CD4-positive, alpha-beta memory T cell (primary cell): ENCODE measurements at regions of chr2 and their contacts with region 1.

Region 1: GRCh38 chr2:8681786-8682692 is at the start of gene ID2:
- DNase-seq: peak; percentile 98 to 99 (median 98)
- H3K4me3 ChIP-seq: peak within 1 kb of the TSS; percentile 82 to 85
- H3K4me3 Mint-ChIP-seq: peak within 1 kb of the TSS; percentile 94 to 100 (median 99)
- H3K27ac ChIP-seq: peak within 1 kb of the TSS; percentile 74
- H3K27ac Mint-ChIP-seq: peak within 1 kb of the TSS; percentile 90 to 97 (median 96)
- H3K4me1 ChIP-seq: peaks cover 41% of the 10 kb centered on the region
- H3K4me1 Mint-ChIP-seq: peaks cover 32 to 61% (median 37%) of the 10 kb centered on the region in 4 donors
- H3K27me3 ChIP-seq: no peaks in the 10 kb centered on the region
- H3K27me3 Mint-ChIP-seq: peaks cover 9 to 18% of the 10 kb centered on the region in 2 donors
- total RNA-seq, gene ID2: 50.8 to 56.4 TPM

Region 2: DNA sequence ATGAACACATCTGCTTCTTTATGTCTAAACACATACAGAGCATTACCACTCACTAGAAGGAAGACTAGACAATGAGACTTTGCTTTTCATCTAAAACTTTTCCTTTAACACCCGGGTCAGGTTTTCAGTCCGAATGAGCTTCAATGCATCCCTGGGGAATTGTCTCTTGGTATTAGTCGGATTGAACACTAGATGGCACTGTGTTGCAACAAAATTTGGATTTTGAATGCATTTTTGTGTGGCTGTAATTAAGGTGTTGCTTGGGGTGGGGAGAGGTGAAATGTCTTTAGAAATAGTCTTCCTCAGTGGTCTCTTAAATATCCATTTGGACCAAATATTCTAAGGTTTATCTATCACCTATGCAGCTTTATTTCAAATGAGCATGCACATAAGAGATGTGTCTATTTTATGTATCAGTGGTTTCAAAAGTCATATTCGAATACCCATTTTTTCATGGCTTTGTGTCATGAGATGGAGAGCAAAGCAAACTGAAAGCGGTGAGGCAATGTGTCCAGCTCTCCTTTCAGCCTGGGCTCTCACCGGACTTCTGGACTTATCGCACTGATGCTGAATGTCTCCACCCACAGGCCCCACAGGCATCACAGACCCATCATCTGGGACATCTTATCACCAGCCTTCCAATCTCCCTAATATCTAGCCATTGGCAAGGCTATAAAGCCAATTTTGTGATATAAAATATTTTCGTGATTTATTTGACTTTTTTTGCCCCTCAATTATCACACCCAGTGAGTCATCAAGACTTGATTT is 1254.6 kb before region 1 on chr2:
- CTCF ChIA-PET with region 1: interaction called, 64 read pairs
- POLR2A ChIA-PET with region 1: interaction called, 20 read pairs
- intact Hi-C with region 1: loop called (anchors 1 kb)
- DNase-seq: peak in 4 of 5 donors; percentile 57 to 69 (median 64)
- H3K4me3 ChIP-seq: no peak overlapping the region
- H3K4me3 Mint-ChIP-seq: peak overlapping the region in 4 of 8 donors; percentile 4 to 49 (median 30)
- H3K27ac ChIP-seq: no peak overlapping the region
- H3K27ac Mint-ChIP-seq: peak overlapping the region in 5 of 7 donors; percentile 8 to 52 (median 16)
- H3K4me1 ChIP-seq: peaks cover 9% of the 10 kb centered on the region
- H3K4me1 Mint-ChIP-seq: peaks cover 19 to 46% (median 32%) of the 10 kb centered on the region in 4 donors
- H3K27me3 ChIP-seq: no peaks in the 10 kb centered on the region
- H3K27me3 Mint-ChIP-seq: peaks cover 1 to 2% of the 10 kb centered on the region in 2 donors

Region 3: DNA sequence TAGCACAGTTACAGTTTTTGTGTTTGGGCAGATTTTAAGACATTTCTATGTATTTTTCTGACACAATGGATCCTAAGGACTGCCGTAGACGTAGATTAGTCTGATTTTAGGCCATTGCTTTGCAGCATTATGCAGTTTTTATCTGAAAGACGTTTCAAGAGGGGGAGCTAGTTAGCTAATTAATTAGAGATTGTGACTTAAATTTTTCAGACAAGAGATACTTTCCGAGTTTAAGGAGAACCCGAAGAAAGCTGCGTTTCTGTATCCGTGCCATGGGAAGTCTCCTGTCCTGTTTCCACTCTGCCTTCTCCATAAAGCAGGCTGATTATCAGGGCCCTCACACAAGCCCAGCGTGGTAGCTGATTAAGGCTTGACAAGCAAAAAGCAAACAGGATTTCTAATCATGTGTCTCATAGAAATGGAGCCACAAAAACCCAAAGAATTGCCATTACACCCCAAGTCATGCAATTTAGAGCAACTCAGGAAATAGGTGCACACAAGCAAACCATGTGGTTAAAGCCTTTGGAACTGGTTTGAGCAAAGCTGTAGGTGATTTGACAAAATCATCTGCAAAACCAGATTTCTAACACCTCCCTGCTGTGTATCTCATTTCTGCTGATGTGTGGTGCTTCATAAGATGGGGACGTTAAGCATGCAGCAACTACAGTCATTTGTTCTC is 956.7 kb before region 1 on chr2:
- CTCF ChIA-PET with region 1: interaction called, 40 read pairs
- POLR2A ChIA-PET with region 1: interaction called, 101 read pairs
- intact Hi-C with region 1: loop called (anchors 1 kb)
- DNase-seq: peak; percentile 65 to 74 (median 69)
- H3K4me3 ChIP-seq: peak overlapping the region in 1 of 2 donors; percentile 13
- H3K4me3 Mint-ChIP-seq: peak overlapping the region; percentile 53 to 92 (median 80)
- H3K27ac ChIP-seq: peak overlapping the region; percentile 26
- H3K27ac Mint-ChIP-seq: peak overlapping the region; percentile 68 to 97 (median 88)
- H3K4me1 ChIP-seq: peaks cover 40% of the 10 kb centered on the region
- H3K4me1 Mint-ChIP-seq: peaks cover 29 to 77% (median 54%) of the 10 kb centered on the region in 4 donors
- H3K27me3 ChIP-seq: no peaks in the 10 kb centered on the region
- H3K27me3 Mint-ChIP-seq: no peaks in the 10 kb centered on the region

Region 4: GRCh38 chr2:8303322-8303832 is 378.7 kb before region 1 on chr2:
- CTCF ChIA-PET with region 1: no interaction called
- POLR2A ChIA-PET with region 1: interaction called, 18 read pairs
- intact Hi-C with region 1: loop called (anchors 2 kb)
- DNase-seq: peak; percentile 72 to 82 (median 76)
- H3K4me3 ChIP-seq: peak overlapping the region; percentile 33 to 40
- H3K4me3 Mint-ChIP-seq: peak overlapping the region; percentile 7 to 83 (median 77)
- H3K27ac ChIP-seq: no peak overlapping the region
- H3K27ac Mint-ChIP-seq: peak overlapping the region; percentile 73 to 90 (median 83)
- H3K4me1 ChIP-seq: peaks cover 70% of the 10 kb centered on the region
- H3K4me1 Mint-ChIP-seq: peaks cover 48 to 86% (median 67%) of the 10 kb centered on the region in 4 donors
- H3K27me3 ChIP-seq: no peaks in the 10 kb centered on the region
- H3K27me3 Mint-ChIP-seq: no peaks in the 10 kb centered on the region

Region 5: GRCh38 chr2:8477552-8478470 is 204.2 kb before region 1 on chr2:
- CTCF ChIA-PET with region 1: interaction called, 9 read pairs
- POLR2A ChIA-PET with region 1: interaction called, 81 read pairs
- intact Hi-C with region 1: no loop called
- DNase-seq: peak; percentile 55 to 66 (median 60)
- H3K4me3 ChIP-seq: peak overlapping the region; percentile 27 to 41
- H3K4me3 Mint-ChIP-seq: peak overlapping the region; percentile 75 to 94 (median 82)
- H3K27ac ChIP-seq: peak overlapping the region; percentile 70
- H3K27ac Mint-ChIP-seq: peak overlapping the region; percentile 92 to 98 (median 96)
- H3K4me1 ChIP-seq: peaks cover 95% of the 10 kb centered on the region
- H3K4me1 Mint-ChIP-seq: peaks cover 66 to 100% (median 88%) of the 10 kb centered on the region in 4 donors
- H3K27me3 ChIP-seq: no peaks in the 10 kb centered on the region
- H3K27me3 Mint-ChIP-seq: no peaks in the 10 kb centered on the region

Region 6: GRCh38 chr2:8754106-8754776 is 72.2 kb after region 1 on chr2:
- CTCF ChIA-PET with region 1: no interaction called
- POLR2A ChIA-PET with region 1: no interaction called
- intact Hi-C with region 1: no loop called
- DNase-seq: no peak
- H3K4me3 ChIP-seq: no peak overlapping the region
- H3K4me3 Mint-ChIP-seq: no peak overlapping the region
- H3K27ac ChIP-seq: no peak overlapping the region
- H3K27ac Mint-ChIP-seq: no peak overlapping the region
- H3K4me1 ChIP-seq: no peaks in the 10 kb centered on the region
- H3K4me1 Mint-ChIP-seq: peaks cover 0 to 6% (median 3%) of the 10 kb centered on the region in 4 donors
- H3K27me3 ChIP-seq: no peaks in the 10 kb centered on the region
- H3K27me3 Mint-ChIP-seq: no peaks in the 10 kb centered on the region

Region 7: DNA sequence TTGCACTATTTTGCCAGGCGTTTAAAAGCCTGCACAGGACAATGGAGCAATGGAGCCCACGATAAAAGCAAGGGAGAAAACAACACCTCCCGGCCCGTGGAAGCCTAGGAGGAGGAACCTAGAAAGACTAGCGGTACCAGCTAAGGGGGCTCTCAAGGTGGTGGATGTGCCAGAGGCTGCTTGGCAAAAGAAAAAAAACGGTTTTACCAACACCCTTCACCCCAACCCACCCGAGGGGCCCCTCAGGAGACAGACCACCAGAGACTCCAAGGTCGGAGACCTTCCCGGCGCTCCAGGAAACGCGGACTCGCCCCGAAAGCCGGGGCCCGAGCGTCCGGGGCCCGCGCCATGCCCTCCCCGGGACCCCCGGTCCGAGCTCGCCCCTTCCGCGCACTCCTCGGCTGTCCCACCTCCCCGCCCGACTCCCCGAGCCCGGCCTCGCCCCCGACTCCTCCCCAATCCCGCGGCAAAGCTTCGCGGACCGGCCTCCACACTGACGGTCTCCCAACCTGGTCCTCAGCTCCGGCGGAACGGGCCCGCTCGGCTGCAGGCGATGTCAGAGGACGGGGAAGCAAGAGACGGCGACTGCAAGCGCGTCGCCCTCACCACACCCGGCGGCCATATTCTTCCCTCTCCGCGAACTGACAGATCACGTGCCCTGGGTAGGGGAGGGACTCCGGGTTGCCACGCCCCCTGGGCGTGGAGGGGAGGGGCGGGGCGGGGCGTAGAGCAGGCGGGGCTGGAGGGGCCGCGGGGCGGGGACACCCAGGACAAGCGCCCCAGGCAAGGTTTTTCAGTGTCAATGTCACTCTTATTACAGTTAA is 155.1 kb after region 1 on chr2 and contains the start of gene KIDINS220:
- CTCF ChIA-PET with region 1: no interaction called
- POLR2A ChIA-PET with region 1: interaction called, 8 read pairs
- intact Hi-C with region 1: loop called (anchors 5 kb)
- DNase-seq: peak; percentile 82 to 87 (median 84)
- H3K4me3 ChIP-seq: peak within 1 kb of the TSS; percentile 77 to 85
- H3K4me3 Mint-ChIP-seq: peak within 1 kb of the TSS; percentile 99 to 100 (median 100)
- H3K27ac ChIP-seq: peak within 1 kb of the TSS; percentile 61
- H3K27ac Mint-ChIP-seq: peak within 1 kb of the TSS; percentile 87 to 99 (median 99)
- H3K4me1 ChIP-seq: peaks cover 44% of the 10 kb centered on the region
- H3K4me1 Mint-ChIP-seq: peaks cover 33 to 62% (median 46%) of the 10 kb centered on the region in 4 donors
- H3K27me3 ChIP-seq: no peaks in the 10 kb centered on the region
- H3K27me3 Mint-ChIP-seq: no peaks in the 10 kb centered on the region
- total RNA-seq, gene KIDINS220: 52.0 to 52.3 TPM